BJ (cell line): ENCODE measurements at regions of chr10 and their contacts with region 1.

Region 1: DNA sequence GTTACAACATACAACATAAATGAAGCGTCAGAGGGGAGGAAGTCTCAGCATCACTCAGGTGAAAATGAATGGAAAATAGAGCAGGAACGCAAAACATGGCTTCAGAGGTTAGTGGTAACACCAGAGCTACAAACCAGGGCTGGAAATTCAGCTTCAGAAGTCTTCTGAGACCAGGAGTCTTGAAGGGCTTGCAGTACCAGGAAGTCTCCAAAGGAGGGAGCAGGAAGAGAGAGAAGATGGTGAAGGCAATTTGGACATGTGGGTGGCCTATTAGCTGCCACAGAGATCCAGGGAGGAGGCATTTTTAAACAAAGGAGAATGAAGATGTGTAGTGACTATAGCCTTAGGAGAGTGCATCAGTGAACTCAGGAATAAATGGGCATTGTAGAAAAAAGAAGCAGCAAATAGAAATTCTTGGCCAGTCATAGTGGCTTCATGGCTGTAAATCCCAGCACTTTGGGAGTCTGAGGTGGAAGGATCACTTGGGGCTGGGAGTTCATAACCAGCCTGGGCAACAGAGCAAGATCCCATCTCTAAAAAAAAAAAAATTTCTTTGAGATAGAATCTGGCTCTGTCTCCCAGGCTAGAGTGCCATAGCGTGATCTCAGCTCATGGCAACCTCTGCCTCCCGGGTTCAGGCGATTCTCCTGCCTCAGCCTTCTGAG is 9.3 kb upstream of the TET1 start:
- DNase-seq: no peak
- H3K4me3 ChIP-seq: no peak overlapping the region
- H3K27me3 ChIP-seq: no peaks in the 10 kb centered on the region
- CTCF ChIP-seq: peak; percentile 90

Region 2: GRCh38 chr10:68423522-68423921 is 127.4 kb before region 1 on chr10:
- CTCF ChIA-PET with region 1: no interaction called
- POLR2A ChIA-PET with region 1: no interaction called
- DNase-seq: no peak
- H3K4me3 ChIP-seq: no peak overlapping the region
- H3K27me3 ChIP-seq: no peaks in the 10 kb centered on the region
- CTCF ChIP-seq: no peak

Region 3: GRCh38 chr10:68501691-68502090 is 49.2 kb before region 1 on chr10:
- CTCF ChIA-PET with region 1: no interaction called
- POLR2A ChIA-PET with region 1: interaction called, 13 read pairs
- DNase-seq: no peak
- H3K4me3 ChIP-seq: no peak overlapping the region
- H3K27me3 ChIP-seq: no peaks in the 10 kb centered on the region
- CTCF ChIP-seq: no peak